ENCODE measurements at regions of chr1 and their contacts with region 1.

Region 1: DNA sequence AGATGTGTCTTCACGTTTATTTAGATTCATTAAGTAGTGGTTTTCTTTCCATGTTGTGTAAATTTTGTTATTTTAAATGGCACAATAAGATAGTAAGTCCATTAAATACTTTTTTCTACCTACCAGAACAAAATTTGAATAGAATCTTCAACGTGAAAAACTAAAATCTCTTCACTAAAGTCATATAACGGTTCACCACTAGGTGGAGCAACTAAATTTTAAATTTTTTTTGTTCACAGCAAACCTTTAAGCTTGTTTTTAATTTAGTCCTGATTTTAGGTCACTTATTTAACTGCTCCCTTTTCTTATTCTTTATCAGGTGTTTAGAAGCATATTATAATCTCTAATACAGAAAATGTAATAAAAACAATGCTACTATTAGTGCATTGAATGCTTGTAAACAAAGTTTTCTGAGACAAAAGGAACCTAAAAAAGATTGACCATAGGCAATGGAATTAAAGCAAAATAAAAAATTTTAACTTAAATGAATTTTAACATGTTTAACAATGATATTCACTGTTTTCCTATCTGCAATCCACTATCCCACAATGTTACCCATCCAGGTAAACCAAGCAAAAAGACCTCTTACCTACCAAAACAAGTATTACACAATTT is 28.3 kb upstream of the PKN2 start:
- DNase-seq: no peak
- ATAC-seq: no peak
- H3K4me3 ChIP-seq: no peak overlapping the region
- H3K27ac ChIP-seq: no peak overlapping the region
- H3K4me1 ChIP-seq: peaks cover 0 to 3% (median 0%) of the 10 kb centered on the region in 9 donors
- H3K27me3 ChIP-seq: no peaks in the 10 kb centered on the region
- CTCF ChIP-seq: peak; percentile 44 to 80 (median 72)

Region 2: DNA sequence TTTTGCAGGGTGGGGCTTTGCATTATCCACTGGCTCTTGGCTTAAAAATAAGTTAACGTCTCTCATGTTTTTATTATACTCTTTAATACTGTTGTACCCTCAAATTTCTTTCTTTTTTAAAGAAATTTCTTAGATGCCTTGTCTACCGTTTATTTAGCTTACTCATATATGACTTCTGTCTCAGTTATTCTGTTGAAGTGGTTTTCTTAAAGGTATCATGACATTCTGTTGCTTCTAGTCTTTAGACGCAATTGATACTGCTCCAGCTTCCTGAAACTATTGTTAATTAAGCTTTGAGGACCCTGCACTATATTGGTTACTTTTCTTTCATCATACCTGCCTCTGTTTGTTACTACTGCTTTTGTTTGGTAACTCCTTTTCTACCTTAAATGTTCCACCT is 40.0 kb after region 1 on chr1:
- intact Hi-C with region 1: no loop called
- DNase-seq: no peak
- ATAC-seq: no peak
- H3K4me3 ChIP-seq: no peak overlapping the region
- H3K27ac ChIP-seq: no peak overlapping the region
- H3K4me1 ChIP-seq: peaks cover 0 to 60% (median 29%) of the 10 kb centered on the region in 9 donors
- H3K27me3 ChIP-seq: no peaks in the 10 kb centered on the region
- CTCF ChIP-seq: no peak

Region 3: DNA sequence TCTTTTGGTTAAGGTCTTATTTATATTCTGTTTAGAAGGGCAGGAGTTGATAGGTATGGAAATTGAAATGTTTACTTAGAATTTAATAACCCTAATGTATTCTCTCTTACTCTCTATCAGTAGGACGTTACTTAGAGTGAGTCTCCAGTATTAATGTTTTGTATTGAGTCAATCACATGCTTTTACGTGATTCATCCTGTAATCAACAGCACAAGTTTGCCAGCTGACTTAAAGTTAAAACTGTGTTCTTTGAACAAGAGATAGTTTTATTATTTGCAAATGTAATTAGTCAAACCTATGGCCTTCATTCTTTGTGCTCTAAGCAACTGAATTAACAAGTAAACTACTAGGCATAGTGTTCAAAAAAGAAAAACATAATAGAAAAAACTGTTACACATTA is 85.6 kb after region 1 on chr1:
- intact Hi-C with region 1: no loop called
- DNase-seq: no peak
- ATAC-seq: no peak
- H3K4me3 ChIP-seq: no peak overlapping the region
- H3K27ac ChIP-seq: no peak overlapping the region
- H3K4me1 ChIP-seq: peaks cover 0 to 15% (median 4%) of the 10 kb centered on the region in 9 donors
- H3K27me3 ChIP-seq: no peaks in the 10 kb centered on the region
- CTCF ChIP-seq: no peak

Region 4: GRCh38 chr1:88763649-88764406 is 108.0 kb after region 1 on chr1:
- intact Hi-C with region 1: no loop called
- DNase-seq: no peak
- ATAC-seq: no peak
- H3K4me3 ChIP-seq: no peak overlapping the region
- H3K27ac ChIP-seq: no peak overlapping the region
- H3K4me1 ChIP-seq: peaks cover 0 to 14% (median 0%) of the 10 kb centered on the region in 9 donors
- H3K27me3 ChIP-seq: no peaks in the 10 kb centered on the region
- CTCF ChIP-seq: no peak

Region 5: GRCh38 chr1:88800382-88801051 is 144.7 kb after region 1 on chr1:
- intact Hi-C with region 1: loop called in 3 of 10 experiments (anchors 10 kb)
- DNase-seq: no peak
- ATAC-seq: peak in 1 of 8 donors; percentile 51
- H3K4me3 ChIP-seq: no peak overlapping the region
- H3K27ac ChIP-seq: no peak overlapping the region
- H3K4me1 ChIP-seq: peaks cover 0 to 14% (median 0%) of the 10 kb centered on the region in 9 donors
- H3K27me3 ChIP-seq: no peaks in the 10 kb centered on the region
- CTCF ChIP-seq: peak; percentile 24 to 74 (median 60)

Region 6: DNA sequence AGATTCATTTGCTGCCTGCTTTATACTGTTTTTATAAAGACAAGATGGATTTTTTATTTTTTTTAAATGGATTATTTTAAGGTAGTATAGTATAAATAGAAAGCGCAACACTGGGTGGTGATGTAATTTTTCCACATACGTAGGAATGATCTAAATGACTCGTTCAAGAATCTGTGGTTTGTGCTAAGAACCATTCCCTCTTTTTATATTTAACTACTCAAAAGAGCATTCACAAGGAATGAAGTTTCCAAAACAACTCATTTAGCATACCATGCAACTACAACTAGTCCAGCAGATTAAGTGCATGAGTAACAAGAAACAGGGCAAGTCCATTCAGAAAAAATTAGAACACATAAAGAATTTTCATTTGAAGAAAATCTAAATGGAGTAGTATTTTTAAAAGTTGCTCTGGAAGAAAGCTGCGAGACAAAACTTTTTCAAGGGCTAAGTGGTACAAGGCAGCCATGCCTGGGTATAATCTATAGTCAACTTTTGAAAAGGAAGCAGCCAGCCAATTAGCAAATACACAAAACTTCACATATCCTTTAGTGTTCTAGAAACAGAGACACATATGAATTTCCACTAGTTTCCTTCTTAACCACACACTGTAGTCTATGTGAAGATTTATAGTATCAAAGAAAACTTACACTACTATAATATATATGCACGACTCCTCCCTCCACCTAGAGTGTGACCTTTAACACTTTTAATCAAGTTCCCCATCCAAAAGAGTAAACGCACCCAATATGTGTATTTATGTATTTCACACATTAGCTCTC is 212.1 kb after region 1 on chr1:
- intact Hi-C with region 1: loop called in 3 of 10 experiments (anchors 5 to 10 kb)
- DNase-seq: no peak
- ATAC-seq: peak in 1 of 8 donors; percentile 44
- H3K4me3 ChIP-seq: no peak overlapping the region
- H3K27ac ChIP-seq: no peak overlapping the region
- H3K4me1 ChIP-seq: peaks cover 0 to 28% (median 16%) of the 10 kb centered on the region in 9 donors
- H3K27me3 ChIP-seq: no peaks in the 10 kb centered on the region
- CTCF ChIP-seq: no peak

Region 7: DNA sequence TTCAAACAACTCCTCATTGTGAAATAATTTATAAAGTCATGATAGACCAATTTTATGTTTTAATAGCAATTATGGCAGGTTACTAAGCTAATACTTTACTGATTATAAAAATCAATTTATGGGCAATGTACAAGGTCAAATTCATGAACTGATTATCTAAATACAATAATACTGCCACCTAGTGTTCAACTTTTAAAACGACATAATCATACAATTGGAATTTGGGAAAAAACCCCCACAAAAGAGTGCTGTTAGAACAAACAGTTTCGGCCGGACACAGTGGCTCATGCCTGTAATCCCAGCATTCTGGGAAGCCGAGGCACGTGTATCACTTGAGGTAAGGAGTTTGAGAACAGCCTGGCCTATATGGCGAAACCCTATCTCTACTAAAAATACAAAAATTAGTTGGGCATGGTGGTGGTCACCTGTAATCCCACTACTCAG is 221.6 kb after region 1 on chr1:
- intact Hi-C with region 1: loop called in 8 of 10 experiments (anchors 2 to 10 kb)
- DNase-seq: no peak
- ATAC-seq: no peak
- H3K4me3 ChIP-seq: no peak overlapping the region
- H3K27ac ChIP-seq: no peak overlapping the region
- H3K4me1 ChIP-seq: peaks cover 0 to 51% (median 37%) of the 10 kb centered on the region in 9 donors
- H3K27me3 ChIP-seq: no peaks in the 10 kb centered on the region
- CTCF ChIP-seq: peak; percentile 21 to 76 (median 59)

Region 8: GRCh38 chr1:88891318-88891950 is 235.6 kb after region 1 on chr1 and contains the start of gene GTF2B:
- intact Hi-C with region 1: loop called in 1 of 10 experiments (anchors 10 kb)
- DNase-seq: peak; percentile 84 to 96
- ATAC-seq: peak; percentile 89 to 96 (median 95)
- H3K4me3 ChIP-seq: peak within 1 kb of the TSS; percentile 74 to 97 (median 90)
- H3K27ac ChIP-seq: peak within 1 kb of the TSS; percentile 61 to 99 (median 90)
- H3K4me1 ChIP-seq: peaks cover 2 to 39% (median 28%) of the 10 kb centered on the region in 9 donors
- H3K27me3 ChIP-seq: no peaks in the 10 kb centered on the region
- CTCF ChIP-seq: peak in 2 of 9 donors; percentile 5 to 8
- total RNA-seq, gene GTF2B: 10.5 to 16.0 (median 12.6) TPM

Measured in heart right ventricle (tissue), 16 donors.